Posterior cingulate gyrus (tissue), 11 donors: ENCODE measurements at regions of chr6 and their contacts with region 1.

Region 1: GRCh38 chr6:75208298-75209183 is 2.7 kb upstream of the COL12A1 start:
- DNase-seq: peak; percentile 74 to 97 (median 88)

Region 2: GRCh38 chr6:73739096-73739495 is 1469.4 kb before region 1 on chr6:
- intact Hi-C with region 1: loop called (anchors 1 kb)
- DNase-seq: no peak

Region 3: GRCh38 chr6:73854998-73855718 is 1353.4 kb before region 1 on chr6:
- intact Hi-C with region 1: loop called (anchors 5 kb)
- DNase-seq: no peak

Region 4: DNA sequence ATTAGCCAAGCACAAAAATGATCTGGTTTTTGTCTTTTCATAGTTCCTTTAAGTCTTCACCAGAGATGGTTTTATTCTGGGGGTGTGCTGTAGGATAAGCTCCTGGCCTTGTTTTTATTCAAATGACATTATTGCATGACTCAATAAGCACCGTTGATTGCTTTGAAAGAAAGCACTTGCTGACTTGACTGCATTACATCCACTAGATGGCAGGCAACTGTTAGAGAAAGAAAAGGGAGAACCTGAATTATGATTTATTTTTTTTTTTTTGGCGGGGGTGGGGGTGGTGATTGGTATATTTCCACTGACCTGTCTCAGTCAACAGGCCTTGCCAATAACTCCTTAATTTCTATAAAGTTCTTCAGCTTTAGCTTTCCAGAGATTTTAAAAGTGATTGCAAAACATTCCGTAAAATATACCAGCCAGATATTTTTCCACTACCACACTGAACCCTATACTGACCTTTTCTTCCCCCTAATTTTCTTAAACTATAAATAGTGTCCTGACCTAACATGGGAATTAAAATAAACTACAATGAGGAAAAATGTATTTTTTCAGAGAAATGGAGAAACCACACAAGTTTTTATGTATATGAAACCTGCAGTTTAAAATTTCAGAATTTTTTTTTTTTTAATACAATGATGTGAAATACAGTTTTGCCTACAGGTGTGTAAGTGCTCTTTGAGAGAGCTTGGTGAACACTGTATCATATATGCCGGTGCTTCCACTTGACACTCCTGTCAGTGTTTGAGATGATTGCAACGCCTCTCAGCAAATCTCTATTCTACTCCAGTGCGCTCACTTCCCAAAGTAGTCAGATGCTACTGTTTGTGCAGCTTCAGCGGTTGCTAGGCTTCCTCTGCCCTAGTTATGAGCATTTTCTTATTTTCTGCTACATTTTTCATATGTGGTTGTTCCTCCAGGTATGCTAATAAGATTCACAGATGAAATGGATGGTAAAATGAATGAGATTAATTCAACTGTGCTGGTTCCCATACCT is 1238.3 kb before region 1 on chr6:
- intact Hi-C with region 1: loop called (anchors 5 kb)
- DNase-seq: no peak

Region 5: DNA sequence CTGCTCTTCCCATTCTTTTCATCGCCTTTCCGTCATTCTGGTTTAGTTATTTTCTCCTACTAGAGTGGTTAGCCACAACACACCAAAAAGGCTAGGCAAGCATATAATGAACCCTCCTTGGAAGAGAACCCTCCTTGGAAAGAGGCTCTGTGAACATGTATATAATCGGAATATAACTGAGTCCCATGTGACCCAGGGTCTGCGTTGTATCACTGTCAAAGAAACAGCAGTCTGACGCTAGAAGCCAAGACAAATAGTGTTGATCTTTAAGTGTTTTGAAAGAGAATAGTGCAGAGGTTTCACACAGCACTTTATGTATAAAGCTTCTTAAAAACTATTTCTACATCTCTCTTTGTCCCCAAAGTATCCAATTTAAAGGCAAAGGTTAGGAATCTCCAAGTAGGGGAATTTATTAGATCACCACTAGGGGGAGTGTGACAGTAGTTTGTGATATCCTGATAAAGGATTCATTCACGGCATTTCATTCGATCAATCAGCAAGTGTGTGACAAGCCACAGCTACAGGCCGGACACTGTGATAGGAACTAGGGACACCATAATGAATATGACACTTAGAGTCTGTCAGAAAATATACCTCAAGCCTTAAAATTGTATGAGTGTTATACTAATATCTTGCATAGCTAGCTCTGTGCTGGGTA is 1117.3 kb before region 1 on chr6:
- intact Hi-C with region 1: loop called (anchors 1 kb)
- DNase-seq: no peak

Region 6: DNA sequence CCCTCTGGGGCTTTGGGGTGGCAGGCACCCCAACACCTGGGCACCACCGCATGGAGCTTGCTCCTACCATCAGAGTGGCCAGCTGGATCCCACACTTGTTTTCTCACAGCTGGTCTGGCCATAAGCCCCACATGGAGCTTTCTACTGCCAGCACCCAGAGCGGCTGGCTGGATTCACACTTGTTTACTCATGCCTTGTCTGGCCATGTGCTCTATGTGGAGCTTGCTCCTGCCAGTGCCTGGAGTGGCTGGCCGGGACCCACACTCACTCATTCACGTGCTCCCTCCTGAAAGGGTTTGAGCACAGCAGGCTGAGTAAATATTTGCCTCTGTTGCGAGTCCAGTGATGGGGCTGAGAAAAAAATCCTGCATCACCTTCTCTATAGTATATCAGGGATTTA is 1025.5 kb before region 1 on chr6:
- intact Hi-C with region 1: no loop called
- DNase-seq: peak in 5 of 10 donors; percentile 10 to 84 (median 75)

Region 7: GRCh38 chr6:74409447-74409846 is 799.1 kb before region 1 on chr6:
- intact Hi-C with region 1: loop called (anchors 5 kb)
- DNase-seq: no peak

Region 8: GRCh38 chr6:74870403-74870802 is 338.1 kb before region 1 on chr6:
- intact Hi-C with region 1: no loop called
- DNase-seq: no peak

Region 9: DNA sequence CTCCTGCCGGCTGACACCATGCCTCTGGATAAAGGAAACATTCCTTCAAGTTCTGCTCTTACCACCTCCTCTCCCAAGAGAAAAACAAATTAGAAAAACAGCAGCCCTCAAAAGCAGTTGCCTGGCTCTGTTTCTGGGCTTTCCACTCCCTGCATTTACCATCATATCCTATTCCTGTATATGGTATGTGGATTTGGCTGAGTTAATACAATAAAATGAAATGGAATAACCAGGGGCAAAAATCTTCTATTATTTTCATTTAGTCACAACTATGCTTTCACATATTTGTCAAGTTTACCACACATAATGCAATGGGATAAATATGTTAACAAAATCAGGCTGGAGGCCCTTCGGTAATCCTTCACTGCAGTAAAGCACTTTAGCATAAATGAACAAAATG is 37.0 kb before region 1 on chr6:
- intact Hi-C with region 1: no loop called
- DNase-seq: no peak